Activated CD8-positive, alpha-beta T cell treated with anti-CD3 and anti-CD28 coated beads for 36 hours (primary cell): ENCODE measurements at regions of chr5 and their contacts with region 1.

Region 1: GRCh38 chr5:66969961-66970360 is 226.6 kb downstream of the CD180 start:
- DNase-seq: no peak
- ATAC-seq: no peak
- H3K4me3 Mint-ChIP-seq: no peak overlapping the region
- H3K27ac Mint-ChIP-seq: no peak overlapping the region
- H3K4me1 Mint-ChIP-seq: no peaks in the 10 kb centered on the region
- H3K27me3 Mint-ChIP-seq: peaks cover 3% of the 10 kb centered on the region
- CTCF ChIP-seq: no peak

Region 2: GRCh38 chr5:66987949-66988838 is 18.2 kb after region 1 on chr5:
- CTCF ChIA-PET with region 1: interaction called, 11 read pairs
- POLR2A ChIA-PET with region 1: no interaction called
- intact Hi-C with region 1: no loop called
- DNase-seq: no peak
- ATAC-seq: peak; percentile 79
- H3K4me3 Mint-ChIP-seq: no peak overlapping the region
- H3K27ac Mint-ChIP-seq: no peak overlapping the region
- H3K4me1 Mint-ChIP-seq: peaks cover 7% of the 10 kb centered on the region
- H3K27me3 Mint-ChIP-seq: peaks cover 6% of the 10 kb centered on the region
- CTCF ChIP-seq: peak; percentile 91

Region 3: GRCh38 chr5:67089200-67089725 is 119.3 kb after region 1 on chr5:
- CTCF ChIA-PET with region 1: no interaction called
- POLR2A ChIA-PET with region 1: no interaction called
- intact Hi-C with region 1: no loop called
- DNase-seq: no peak
- ATAC-seq: no peak
- H3K4me3 Mint-ChIP-seq: no peak overlapping the region
- H3K27ac Mint-ChIP-seq: no peak overlapping the region
- H3K4me1 Mint-ChIP-seq: peaks cover 2% of the 10 kb centered on the region
- H3K27me3 Mint-ChIP-seq: no peaks in the 10 kb centered on the region
- CTCF ChIP-seq: no peak